Right ventricle myocardium inferior (tissue), 1 donor: ENCODE measurements at regions of chr9 and their contacts with region 1.

Region 1: DNA sequence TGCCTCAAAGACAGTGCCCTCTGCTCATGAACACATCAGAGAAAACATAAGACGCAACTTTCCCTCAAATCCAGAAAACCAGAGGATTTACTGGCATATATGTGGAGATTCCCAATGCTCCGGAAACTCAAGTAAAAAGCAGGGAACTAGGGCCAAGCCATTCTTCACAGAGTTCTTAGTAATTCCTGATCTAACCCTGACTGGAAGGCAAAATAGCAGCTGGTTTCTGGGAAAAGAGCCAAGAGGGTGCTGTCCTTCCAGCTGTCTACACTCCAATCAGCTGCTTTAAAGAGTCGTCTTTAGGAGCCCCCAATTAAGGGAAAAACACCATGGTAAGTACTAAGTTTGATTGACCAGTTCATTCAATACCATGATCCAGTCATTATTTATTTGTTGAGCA is 49.6 kb downstream of the GNA14 start:
- DNase-seq: no peak
- ATAC-seq: peak; percentile 66

Region 2: DNA sequence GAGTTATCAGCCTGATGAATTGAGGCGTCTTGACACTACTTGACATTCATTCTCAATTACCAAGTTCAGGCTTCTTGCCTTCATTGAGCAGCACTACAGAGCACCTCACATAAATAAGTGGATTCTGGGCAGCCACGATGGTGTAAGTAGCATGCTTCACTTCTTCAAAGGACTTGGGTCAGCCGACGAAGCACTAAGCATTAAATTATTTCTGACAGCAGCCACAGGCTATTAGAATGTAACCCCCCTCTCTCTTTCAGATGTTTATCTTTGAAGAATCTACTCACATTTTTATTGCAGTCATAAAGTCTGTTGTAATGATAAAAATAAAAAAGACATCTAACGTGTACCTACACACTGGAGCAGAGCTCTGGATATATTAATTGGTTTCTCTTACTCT is 467.1 kb before region 1 on chr9:
- intact Hi-C with region 1: no loop called
- DNase-seq: no peak
- ATAC-seq: no peak

Region 3: GRCh38 chr9:77514886-77515711 is 83.4 kb before region 1 on chr9:
- intact Hi-C with region 1: loop called (anchors 5 kb)
- DNase-seq: no peak
- ATAC-seq: peak; percentile 44

Region 4: GRCh38 chr9:77648234-77649120 is 50.0 kb after region 1 on chr9 and contains the start of gene GNA14:
- intact Hi-C with region 1: loop called (anchors 5 kb)
- DNase-seq: peak; percentile 77
- ATAC-seq: peak; percentile 80
- total RNA-seq, gene GNA14: 2.6 TPM